ENCODE measurements at regions of chr20 and their contacts with region 1.

Region 1: DNA sequence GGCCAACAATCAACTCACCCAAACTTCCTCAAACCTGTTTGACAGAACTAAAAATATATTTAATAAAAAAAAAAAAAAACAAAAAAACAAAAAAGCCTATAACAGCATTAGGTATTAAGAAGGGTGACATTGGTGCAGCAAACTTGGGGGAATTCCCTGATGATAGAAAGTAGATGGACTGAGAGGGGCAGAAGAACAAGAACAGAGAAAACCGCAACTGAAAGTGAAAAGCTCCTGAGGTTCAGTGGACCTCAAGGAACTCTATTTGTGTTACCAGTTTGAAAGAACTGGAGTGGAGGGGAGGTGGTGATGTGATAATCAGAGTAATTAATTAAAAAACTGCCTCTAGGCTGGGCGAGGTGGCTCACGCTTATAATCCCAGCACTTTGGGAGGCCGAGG is 53.8 kb downstream of the MACROD2 start:
- DNase-seq: no peak
- ATAC-seq: no peak
- H3K4me3 ChIP-seq: no peak overlapping the region
- H3K27ac ChIP-seq: no peak overlapping the region
- H3K4me1 ChIP-seq: no peaks in the 10 kb centered on the region
- H3K27me3 ChIP-seq: peaks cover 0 to 4% (median 0%) of the 10 kb centered on the region in 7 donors
- CTCF ChIP-seq: no peak

Region 2: DNA sequence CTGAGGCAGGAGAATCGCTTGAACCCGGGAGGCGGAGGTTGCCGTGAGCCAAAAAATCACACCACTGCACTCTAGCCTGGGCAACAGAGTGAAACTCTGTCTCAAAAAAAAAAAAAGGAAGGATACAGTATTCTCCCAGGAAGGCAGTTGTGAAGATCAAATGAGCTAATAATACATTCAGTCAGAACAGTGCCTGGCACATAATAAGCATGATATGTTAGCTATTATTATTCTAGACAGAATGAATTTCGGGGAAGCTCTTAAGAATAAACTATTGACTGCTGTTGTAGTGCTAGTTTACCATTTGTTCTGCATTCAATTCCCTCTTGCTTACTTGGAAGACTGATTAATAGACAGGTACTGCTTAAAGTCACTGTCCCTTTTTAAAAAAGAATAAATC is 223.6 kb before region 1 on chr20:
- intact Hi-C with region 1: loop called in 8 of 10 experiments (anchors 2 to 5 kb)
- DNase-seq: no peak
- ATAC-seq: peak in 5 of 8 donors; percentile 32 to 65 (median 48)
- H3K4me3 ChIP-seq: no peak overlapping the region
- H3K27ac ChIP-seq: no peak overlapping the region
- H3K4me1 ChIP-seq: peaks cover 0 to 13% (median 0%) of the 10 kb centered on the region in 9 donors
- H3K27me3 ChIP-seq: no peaks in the 10 kb centered on the region
- CTCF ChIP-seq: no peak

Region 3: DNA sequence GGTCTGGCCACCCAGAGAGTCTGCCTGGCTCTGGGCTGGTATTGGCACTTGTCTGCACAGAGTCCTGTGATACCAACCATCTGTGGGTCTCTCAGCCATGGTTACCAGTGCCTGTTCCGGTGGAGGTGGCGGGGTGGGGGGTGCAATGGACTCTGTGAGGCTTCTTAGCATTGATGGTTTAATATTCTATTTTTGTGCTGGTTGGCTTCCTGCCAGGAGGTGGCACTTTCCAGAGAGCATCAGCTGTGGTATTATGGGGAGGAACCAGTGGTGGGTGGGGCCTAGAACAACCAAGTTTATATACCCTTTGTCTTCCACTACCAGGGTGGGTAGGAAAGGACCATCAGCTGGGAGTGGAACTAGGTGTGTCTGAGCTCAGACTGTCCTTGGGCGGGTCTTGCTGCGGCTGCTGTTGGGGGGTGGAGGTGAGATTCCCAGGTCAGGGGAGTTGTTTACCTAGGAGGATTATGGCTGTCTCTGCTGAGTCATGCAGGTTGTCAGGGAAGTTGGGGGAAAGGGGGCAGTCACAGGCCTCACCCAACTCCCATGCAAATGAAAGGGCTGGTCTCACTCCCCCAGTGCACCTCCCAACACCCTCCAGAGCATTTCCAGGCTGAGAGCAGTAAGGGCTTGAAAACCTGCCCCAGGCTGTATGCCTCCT is 170.8 kb after region 1 on chr20:
- intact Hi-C with region 1: no loop called
- DNase-seq: peak in 1 of 2 donors; percentile 25
- ATAC-seq: peak in 4 of 8 donors; percentile 46 to 62 (median 56)
- H3K4me3 ChIP-seq: no peak overlapping the region
- H3K27ac ChIP-seq: no peak overlapping the region
- H3K4me1 ChIP-seq: peaks cover 0 to 4% (median 0%) of the 10 kb centered on the region in 9 donors
- H3K27me3 ChIP-seq: no peaks in the 10 kb centered on the region
- CTCF ChIP-seq: no peak